PC-9 (cell line): ENCODE measurements at regions of chr7 and their contacts with region 1.

Region 1: GRCh38 chr7:27235387-27236311 is 7.0 kb upstream of the EVX1 start:
- DNase-seq: peak; percentile 44 to 74
- H3K4me3 ChIP-seq: peak overlapping the region; percentile 64
- H3K27ac ChIP-seq: no peak overlapping the region
- H3K4me1 ChIP-seq: no peaks in the 10 kb centered on the region
- H3K27me3 ChIP-seq: peaks cover 8% of the 10 kb centered on the region; the same call in 1 of the 2 replicates
- CTCF ChIP-seq: peak; percentile 75

Region 2: GRCh38 chr7:27346531-27347270 is 111.1 kb after region 1 on chr7:
- CTCF ChIA-PET with region 1: no interaction called
- POLR2A ChIA-PET with region 1: no interaction called
- intact Hi-C with region 1: loop called (anchors 10 kb)
- DNase-seq: peak; percentile 85 to 98
- H3K4me3 ChIP-seq: peak overlapping the region; percentile 35; the same call in 1 of the 2 replicates
- H3K27ac ChIP-seq: peak overlapping the region; percentile 70
- H3K4me1 ChIP-seq: peaks cover 52% of the 10 kb centered on the region
- H3K27me3 ChIP-seq: no peaks in the 10 kb centered on the region
- CTCF ChIP-seq: no peak

Region 3: DNA sequence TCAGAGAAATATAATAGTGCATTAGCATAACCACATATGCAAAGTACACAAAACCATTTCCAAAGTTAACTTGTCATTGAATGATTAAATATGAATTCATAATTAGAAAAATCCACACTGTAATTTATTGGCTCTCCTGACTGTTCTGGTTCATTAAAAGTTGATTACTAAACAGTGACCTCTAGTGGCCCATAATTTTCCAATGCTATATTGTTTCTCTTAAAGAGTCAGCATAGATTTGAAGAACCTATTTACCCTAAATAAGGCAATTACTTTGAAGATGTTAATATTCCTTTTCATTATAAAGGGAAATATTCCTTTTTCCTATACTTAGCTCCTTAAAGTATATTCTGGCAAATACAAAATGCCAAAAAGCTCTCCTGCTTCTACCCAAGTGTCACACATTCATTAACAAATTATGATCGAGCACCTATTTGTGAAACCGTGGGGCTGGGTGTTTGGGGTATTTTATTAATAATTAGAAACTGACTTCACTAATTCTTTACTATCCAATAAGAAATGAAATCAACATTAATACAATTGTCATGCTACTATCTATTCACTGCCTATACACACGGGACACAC is 340.8 kb after region 1 on chr7:
- CTCF ChIA-PET with region 1: no interaction called
- POLR2A ChIA-PET with region 1: no interaction called
- intact Hi-C with region 1: loop called (anchors 1 kb)
- DNase-seq: no peak
- H3K4me3 ChIP-seq: no peak overlapping the region
- H3K27ac ChIP-seq: no peak overlapping the region
- H3K4me1 ChIP-seq: no peaks in the 10 kb centered on the region
- H3K27me3 ChIP-seq: no peaks in the 10 kb centered on the region
- CTCF ChIP-seq: peak; percentile 91

Region 4: GRCh38 chr7:27662490-27663205 is 427.0 kb after region 1 on chr7 and contains the start of gene HIBADH:
- CTCF ChIA-PET with region 1: no interaction called
- POLR2A ChIA-PET with region 1: no interaction called
- intact Hi-C with region 1: no loop called
- DNase-seq: peak; percentile 99
- H3K4me3 ChIP-seq: peak within 1 kb of the TSS; percentile 79
- H3K27ac ChIP-seq: peak within 1 kb of the TSS; percentile 64
- H3K4me1 ChIP-seq: peaks cover 22% of the 10 kb centered on the region
- H3K27me3 ChIP-seq: no peaks in the 10 kb centered on the region
- CTCF ChIP-seq: no peak; the same call in 1 of the 2 replicates
- total RNA-seq, gene HIBADH: 72.4 and 73.9 TPM in 2 replicates